ENCODE measurements at regions of chr10 and their contacts with region 1.

Region 1: GRCh38 chr10:30687698-30688219 is 58.2 kb upstream of the LYZL2 start:
- H3K4me3 ChIP-seq: no peak overlapping the region
- H3K27ac ChIP-seq: no peak overlapping the region
- H3K4me1 ChIP-seq: no peaks in the 10 kb centered on the region
- CTCF ChIP-seq: peak; percentile 42; the same call in 1 of the 2 replicates

Region 2: DNA sequence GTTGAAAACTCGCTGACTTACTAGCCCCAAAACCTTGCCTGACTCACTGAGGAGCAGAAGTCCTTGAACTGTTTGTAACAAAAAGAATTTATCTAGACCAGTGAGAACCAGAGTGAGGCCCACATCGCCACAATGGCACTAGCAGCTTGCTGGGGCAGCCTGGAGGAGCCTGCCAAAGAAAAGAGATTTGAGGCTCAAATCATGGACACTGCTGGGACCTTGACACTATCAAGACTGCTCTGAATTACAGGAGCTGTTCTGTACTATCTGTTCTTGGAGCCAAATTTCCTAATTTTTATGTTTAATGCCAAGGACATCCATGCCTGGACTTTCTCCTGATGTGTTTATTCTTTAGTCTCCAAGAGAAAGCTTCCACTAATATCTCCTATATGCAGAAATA is 546.3 kb before region 1 on chr10:
- CTCF ChIA-PET with region 1: no interaction called
- POLR2A ChIA-PET with region 1: no interaction called
- H3K4me3 ChIP-seq: no peak overlapping the region
- H3K27ac ChIP-seq: no peak overlapping the region
- H3K4me1 ChIP-seq: no peaks in the 10 kb centered on the region
- CTCF ChIP-seq: no peak

Region 3: DNA sequence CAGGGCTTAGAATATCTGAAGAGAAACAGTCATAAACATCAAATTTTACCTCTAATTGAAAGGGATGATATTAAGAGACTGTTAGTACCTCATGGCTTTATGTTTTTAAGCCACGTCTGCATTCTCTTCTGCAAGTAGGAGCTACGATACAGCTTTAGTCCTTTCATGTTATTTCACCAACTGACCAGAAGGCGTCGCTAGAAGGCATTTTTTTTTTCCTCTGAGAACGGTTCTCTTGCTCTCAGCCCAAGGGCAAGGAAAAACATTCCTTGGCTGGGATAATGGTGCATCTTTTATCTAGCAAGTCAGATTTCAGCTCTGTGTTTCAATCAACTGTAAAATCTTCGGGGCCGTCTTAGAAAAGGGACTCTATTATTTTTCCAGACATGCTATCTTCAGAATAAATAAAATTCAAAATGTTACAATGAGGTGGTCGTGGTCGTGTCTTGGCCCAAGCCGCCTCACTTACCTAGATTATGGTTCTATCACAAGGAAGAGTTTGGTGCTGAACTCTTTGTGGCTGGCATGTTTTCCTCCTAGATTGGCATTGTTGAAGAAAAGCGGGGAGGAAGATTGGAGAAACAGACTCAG is 16.6 kb before region 1 on chr10:
- CTCF ChIA-PET with region 1: interaction called, 17 read pairs
- POLR2A ChIA-PET with region 1: no interaction called
- H3K4me3 ChIP-seq: no peak overlapping the region
- H3K27ac ChIP-seq: no peak overlapping the region
- H3K4me1 ChIP-seq: no peaks in the 10 kb centered on the region
- CTCF ChIP-seq: peak; percentile 40; the same call in 1 of the 2 replicates

Region 4: DNA sequence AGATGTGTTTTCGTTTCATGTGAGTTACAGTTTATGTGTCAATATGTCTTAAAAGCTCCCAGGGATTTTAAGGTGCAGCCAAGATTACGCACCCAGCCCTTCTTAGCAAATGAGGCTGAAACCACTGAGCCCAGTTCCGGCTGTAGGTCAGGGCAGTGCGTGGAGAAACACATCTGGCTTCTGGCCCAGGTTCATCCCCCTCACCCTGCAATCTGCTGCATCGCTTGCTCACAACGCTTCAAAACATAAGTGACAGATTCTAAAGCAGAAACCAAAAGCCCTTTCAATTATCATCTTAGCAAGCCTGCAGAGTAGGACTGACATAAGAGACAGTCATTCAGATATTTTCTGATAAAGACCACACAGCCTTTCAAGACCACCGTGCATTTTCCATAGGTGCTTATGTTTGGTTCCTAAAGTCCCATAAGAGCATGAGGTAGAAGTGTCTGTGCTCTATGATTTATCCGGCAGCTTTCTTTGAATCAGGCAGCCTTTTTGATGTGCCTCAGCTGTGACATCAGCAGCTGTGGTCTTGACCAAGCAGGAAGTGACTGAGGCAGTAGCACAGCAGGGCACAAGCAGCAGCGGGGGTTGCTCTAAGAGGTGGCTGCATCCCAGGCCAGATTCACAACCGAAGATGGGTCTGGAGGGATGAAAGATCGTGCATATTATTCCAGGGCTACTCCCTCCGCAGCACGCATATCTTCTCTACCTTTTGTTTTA is 13.9 kb after region 1 on chr10:
- CTCF ChIA-PET with region 1: interaction called, 12 read pairs
- POLR2A ChIA-PET with region 1: no interaction called
- H3K4me3 ChIP-seq: no peak overlapping the region
- H3K27ac ChIP-seq: no peak overlapping the region
- H3K4me1 ChIP-seq: no peaks in the 10 kb centered on the region
- CTCF ChIP-seq: no peak

Region 5: DNA sequence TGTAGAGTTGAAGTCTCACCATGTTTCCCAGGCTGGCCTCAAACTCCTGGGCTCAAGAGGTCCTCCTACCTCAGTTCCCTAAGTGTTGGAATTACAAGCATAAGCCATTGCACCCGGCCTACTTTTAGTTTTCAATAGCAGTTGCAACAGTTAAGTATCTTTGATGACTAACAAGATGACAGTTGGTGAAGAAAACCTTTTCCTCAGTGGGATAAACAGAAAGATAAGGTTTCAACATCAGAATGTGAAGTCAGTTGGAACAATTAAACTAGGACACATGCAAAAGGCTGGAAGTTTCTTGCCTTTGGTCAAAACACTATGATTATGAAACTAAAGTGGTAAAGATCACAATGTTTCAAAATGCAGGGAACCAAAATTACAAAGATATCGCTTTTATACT is 174.7 kb after region 1 on chr10:
- CTCF ChIA-PET with region 1: no interaction called
- POLR2A ChIA-PET with region 1: no interaction called
- H3K4me3 ChIP-seq: no peak overlapping the region
- H3K27ac ChIP-seq: no peak overlapping the region
- H3K4me1 ChIP-seq: no peaks in the 10 kb centered on the region
- CTCF ChIP-seq: no peak